Calu3 (cell line): ENCODE measurements at regions of chr15 and their contacts with region 1.

Region 1: DNA sequence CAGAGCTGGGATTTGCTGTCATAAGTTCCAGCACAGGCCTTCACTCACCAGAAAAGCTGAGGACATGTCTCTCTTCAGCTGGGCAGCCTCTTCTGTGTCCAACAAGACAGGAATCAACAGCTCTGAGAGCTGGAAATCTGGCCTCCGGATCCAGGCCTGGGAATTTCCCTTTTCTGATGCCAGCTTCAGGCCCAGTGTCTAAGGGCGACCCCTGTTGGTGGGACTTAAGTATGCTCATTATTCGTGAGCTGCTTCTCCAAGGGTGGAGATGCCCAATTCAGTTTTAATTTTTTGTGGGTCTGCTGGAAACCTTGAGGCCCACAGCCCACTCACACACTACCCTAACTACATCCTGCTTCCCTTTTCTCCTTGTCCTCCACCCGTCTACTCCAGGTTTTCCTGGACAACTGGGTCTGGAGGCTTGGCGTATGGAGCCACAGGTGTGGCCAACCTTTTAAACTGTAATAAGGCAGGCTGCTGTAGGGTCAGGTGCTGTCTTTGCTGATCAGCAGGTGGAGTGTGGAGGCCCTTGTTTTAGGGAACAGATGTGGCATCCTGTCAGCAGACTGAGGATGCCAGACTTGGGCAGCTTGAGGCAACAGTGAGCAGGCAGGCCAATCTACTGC is 2.6 kb upstream of the CEMIP start:
- DNase-seq: peak; percentile 90
- H3K4me3 Mint-ChIP-seq: no peak overlapping the region
- H3K27ac Mint-ChIP-seq: no peak overlapping the region
- H3K4me1 Mint-ChIP-seq: peaks cover 36% of the 10 kb centered on the region
- H3K27me3 Mint-ChIP-seq: peaks cover 26% of the 10 kb centered on the region
- CTCF ChIP-seq: peak; percentile 77

Region 2: DNA sequence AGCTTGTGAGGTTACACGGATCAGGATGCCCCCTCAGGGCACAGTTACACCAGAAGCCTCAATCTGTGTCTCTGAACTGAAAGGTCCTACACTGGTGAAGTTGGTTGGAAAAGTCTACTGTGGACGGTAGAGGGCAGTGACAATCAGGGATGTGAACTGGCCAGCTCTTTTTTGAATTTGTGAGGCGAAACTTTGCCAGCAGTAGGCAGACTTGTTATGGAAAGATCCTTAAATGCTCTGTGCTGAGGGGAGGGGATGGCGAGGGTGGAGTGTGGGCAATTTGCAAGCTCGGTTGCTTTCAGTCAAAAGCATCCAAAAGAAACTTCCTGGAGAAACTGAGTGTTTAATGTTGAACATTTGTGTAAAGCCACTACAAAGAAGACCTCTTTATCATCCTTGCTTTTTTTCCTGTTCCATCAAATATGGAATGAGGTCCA is 208.8 kb before region 1 on chr15:
- CTCF ChIA-PET with region 1: interaction called, 151 read pairs
- intact Hi-C with region 1: loop called (anchors 1 kb)
- DNase-seq: peak; percentile 76
- H3K4me3 Mint-ChIP-seq: no peak overlapping the region
- H3K27ac Mint-ChIP-seq: no peak overlapping the region
- H3K4me1 Mint-ChIP-seq: peaks cover 7% of the 10 kb centered on the region
- H3K27me3 Mint-ChIP-seq: peaks cover 16% of the 10 kb centered on the region
- CTCF ChIP-seq: peak; percentile 75

Region 3: DNA sequence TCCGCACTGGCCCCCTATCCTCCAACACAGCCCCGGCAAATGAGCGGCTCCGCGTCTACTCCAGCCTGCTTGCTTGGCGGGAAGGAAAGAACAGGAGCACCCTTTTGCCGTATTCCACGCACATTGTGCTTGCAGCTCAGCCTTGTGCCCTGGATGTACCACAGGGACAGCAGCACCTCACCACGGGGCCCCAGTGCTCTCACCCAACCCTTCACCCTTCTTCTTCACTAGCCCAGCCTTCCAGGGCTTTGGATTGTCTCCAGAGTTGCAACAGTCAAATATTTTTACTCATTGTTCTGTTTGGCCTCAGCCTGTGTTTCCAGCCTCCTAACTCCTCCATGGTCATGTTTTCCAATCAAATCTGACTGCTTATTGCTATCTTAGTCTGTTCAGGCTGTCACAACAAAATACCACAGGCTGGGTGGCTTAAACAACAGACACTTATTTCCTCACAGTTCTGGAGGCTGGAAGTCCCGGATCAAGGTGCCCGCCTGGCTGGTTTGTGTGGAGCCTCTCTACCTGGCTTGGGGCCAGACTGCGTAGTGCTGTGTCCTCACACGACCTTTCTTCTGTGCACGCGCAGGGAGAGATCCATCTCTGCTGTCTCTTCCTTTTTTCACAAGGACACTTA is 160.7 kb before region 1 on chr15:
- CTCF ChIA-PET with region 1: interaction called, 29 read pairs
- intact Hi-C with region 1: loop called (anchors 1 kb)
- DNase-seq: peak; percentile 68
- H3K4me3 Mint-ChIP-seq: no peak overlapping the region
- H3K27ac Mint-ChIP-seq: no peak overlapping the region
- H3K4me1 Mint-ChIP-seq: peaks cover 22% of the 10 kb centered on the region
- H3K27me3 Mint-ChIP-seq: no peaks in the 10 kb centered on the region
- CTCF ChIP-seq: no peak

Region 4: DNA sequence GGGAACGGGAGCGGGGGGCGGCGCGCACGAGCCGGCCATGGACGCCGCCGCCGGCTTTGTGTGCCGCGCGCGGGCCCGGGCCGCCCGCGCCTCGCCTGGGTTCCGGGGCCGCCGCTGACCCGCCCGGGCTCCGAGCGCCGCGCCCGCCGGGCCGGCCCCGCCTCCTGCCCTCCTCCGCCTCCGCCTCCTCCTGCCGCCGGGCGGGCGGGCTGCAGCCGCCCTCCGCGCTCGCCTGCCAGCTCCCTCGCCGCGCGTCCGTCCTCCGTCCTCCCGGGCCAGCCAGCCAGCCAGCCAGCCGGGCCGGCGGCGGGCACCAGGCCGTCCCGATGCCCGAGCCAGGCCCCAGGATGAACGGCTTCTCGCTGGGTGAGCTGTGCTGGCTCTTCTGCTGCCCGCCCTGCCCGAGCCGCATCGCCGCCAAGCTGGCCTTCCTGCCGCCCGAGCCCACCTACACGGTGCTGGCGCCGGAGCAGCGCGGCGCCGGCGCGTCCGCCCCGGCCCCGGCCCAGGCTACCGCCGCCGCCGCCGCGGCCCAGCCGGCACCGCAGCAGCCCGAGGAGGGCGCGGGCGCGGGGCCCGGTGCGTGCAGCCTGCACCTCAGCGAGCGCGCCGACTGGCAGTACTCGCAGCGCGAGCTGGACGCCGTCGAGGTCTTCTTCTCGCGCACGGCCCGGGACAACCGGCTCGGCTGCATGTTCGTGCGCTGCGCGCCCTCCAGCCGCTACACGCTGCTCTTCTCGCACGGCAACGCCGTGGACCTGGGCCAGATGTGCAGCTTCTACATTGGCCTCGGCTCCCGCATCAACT is 81.2 kb before region 1 on chr15 and contains the start of gene ABHD17C:
- CTCF ChIA-PET with region 1: interaction called, 26 read pairs
- intact Hi-C with region 1: no loop called
- DNase-seq: peak; percentile 84
- H3K4me3 Mint-ChIP-seq: peak within 1 kb of the TSS; percentile 91
- H3K27ac Mint-ChIP-seq: peak within 1 kb of the TSS; percentile 92
- H3K4me1 Mint-ChIP-seq: peaks cover 40% of the 10 kb centered on the region
- H3K27me3 Mint-ChIP-seq: no peaks in the 10 kb centered on the region
- CTCF ChIP-seq: no peak
- total RNA-seq, gene ABHD17C: 69.4 and 69.7 TPM in 2 replicates

Region 5: GRCh38 chr15:80856809-80857377 is 80.4 kb after region 1 on chr15:
- CTCF ChIA-PET with region 1: interaction called, 25 read pairs
- intact Hi-C with region 1: loop called (anchors 2 kb)
- DNase-seq: peak; percentile 65
- H3K4me3 Mint-ChIP-seq: no peak overlapping the region
- H3K27ac Mint-ChIP-seq: peak overlapping the region; percentile 0
- H3K4me1 Mint-ChIP-seq: peaks cover 40% of the 10 kb centered on the region
- H3K27me3 Mint-ChIP-seq: peaks cover 18% of the 10 kb centered on the region
- CTCF ChIP-seq: no peak

Region 6: GRCh38 chr15:81265944-81266775 is 489.6 kb after region 1 on chr15:
- CTCF ChIA-PET with region 1: interaction called, 5 read pairs
- intact Hi-C with region 1: loop called (anchors 10 kb)
- DNase-seq: peak; percentile 89
- H3K4me3 Mint-ChIP-seq: peak overlapping the region; percentile 36
- H3K27ac Mint-ChIP-seq: no peak overlapping the region
- H3K4me1 Mint-ChIP-seq: peaks cover 14% of the 10 kb centered on the region
- H3K27me3 Mint-ChIP-seq: peaks cover 73% of the 10 kb centered on the region
- CTCF ChIP-seq: peak; percentile 92